HCT116 (cell line): ENCODE measurements at regions of chr6 and their contacts with region 1.

Region 1: DNA sequence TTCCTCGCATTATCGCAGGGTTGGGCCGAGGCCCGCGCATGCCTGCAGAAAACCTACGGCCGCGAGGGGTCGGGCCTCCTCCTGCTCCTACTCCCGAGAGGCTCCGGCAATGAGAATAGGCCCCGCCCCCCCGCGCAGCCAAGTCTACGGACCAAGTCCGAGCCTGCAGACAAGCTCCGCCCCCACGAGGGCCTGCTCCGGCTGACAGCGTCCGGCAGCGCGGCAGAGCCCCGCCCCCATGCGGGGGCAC is 3.1 kb upstream of the GPSM3 start:
- DNase-seq: peak; percentile 99
- ATAC-seq: peak; percentile 88
- H3K4me3 ChIP-seq: peak overlapping the region; percentile 70 to 76
- H3K27ac ChIP-seq: peak overlapping the region; percentile 99
- H3K4me1 ChIP-seq: peaks cover 27 to 58% of the 10 kb centered on the region in 2 experiments
- H3K27me3 ChIP-seq: no peaks in the 10 kb centered on the region
- CTCF ChIP-seq: peak in 1 of 3 experiments; percentile 54; a peak in 2 of 6 replicates
- POLR2A ChIP-seq: peak; percentile 17
- RAD21 ChIP-seq: no peak

Region 2: DNA sequence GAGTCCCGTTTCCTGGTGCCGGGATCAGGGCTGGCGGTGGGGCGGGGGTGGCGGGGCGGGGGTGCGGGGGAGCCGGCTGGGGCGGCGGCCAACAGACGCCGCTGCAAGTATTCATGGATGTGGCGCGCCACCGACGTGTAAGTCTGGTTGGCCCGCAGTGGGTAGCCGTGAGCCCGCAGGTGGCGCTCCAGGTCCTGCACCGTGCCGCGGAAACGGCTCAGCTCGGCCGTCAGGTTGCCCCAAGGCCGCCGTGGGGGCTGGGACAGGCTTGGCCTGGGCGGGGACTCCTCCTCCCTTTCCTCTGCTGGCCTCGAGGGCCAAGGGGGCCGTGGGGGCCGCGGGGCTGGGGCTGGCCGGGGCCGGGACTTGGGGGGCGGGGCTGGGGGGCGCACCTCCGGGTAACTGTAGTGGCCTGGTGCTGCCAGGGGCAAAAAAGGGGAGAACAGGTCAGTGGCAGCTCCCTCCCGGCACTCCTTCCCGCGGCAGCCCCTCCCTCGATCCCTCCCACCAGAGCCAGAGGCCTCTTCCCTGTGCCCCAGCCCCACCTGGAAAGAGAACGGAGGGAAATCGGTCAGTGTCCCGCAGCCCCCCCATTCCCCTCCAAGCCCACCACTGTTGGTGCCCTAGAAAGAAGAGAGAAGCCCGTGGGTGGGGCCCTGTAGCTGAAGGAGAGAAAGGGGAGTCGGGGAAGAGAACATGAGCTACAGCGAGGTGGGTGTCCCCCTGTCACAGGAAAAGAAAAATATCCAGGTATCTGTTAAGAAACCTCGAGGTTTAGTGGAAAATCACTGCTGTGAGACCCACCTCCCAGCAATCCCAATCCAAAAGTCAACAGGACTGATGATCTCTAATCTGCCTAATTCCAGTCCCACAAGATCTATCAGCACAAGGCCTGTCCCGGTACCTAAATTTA is 107.7 kb before region 1 on chr6:
- CTCF ChIA-PET with region 1: interaction called, 4 read pairs
- POLR2A ChIA-PET with region 1: no interaction called
- RAD21 ChIA-PET with region 1: no interaction called
- intact Hi-C with region 1: loop called (anchors 1 kb)
- DNase-seq: peak; percentile 81
- ATAC-seq: peak; percentile 99
- H3K4me3 ChIP-seq: peak overlapping the region; percentile 19; a peak in 3 of 4 replicates
- H3K27ac ChIP-seq: peak overlapping the region; percentile 47; the same call in 1 of the 2 replicates
- H3K4me1 ChIP-seq: peaks cover 14 to 28% of the 10 kb centered on the region in 2 experiments
- H3K27me3 ChIP-seq: no peaks in the 10 kb centered on the region
- CTCF ChIP-seq: peak; percentile 59 to 71 (median 64)
- POLR2A ChIP-seq: no peak
- RAD21 ChIP-seq: peak; percentile 88

Region 3: GRCh38 chr6:32118782-32119628 is 76.6 kb before region 1 on chr6:
- CTCF ChIA-PET with region 1: interaction called, 18 read pairs
- POLR2A ChIA-PET with region 1: no interaction called
- RAD21 ChIA-PET with region 1: no interaction called
- intact Hi-C with region 1: loop called (anchors 1 kb)
- DNase-seq: peak; percentile 59
- ATAC-seq: peak; percentile 94
- H3K4me3 ChIP-seq: no peak overlapping the region
- H3K27ac ChIP-seq: no peak overlapping the region; the same call in 1 of the 2 replicates
- H3K4me1 ChIP-seq: peaks cover 0 to 21% of the 10 kb centered on the region in 2 experiments; a peak in 2 of 4 replicates
- H3K27me3 ChIP-seq: no peaks in the 10 kb centered on the region
- CTCF ChIP-seq: peak; percentile 83 to 98 (median 92)
- POLR2A ChIP-seq: no peak
- RAD21 ChIP-seq: peak; percentile 94

Region 4: GRCh38 chr6:32127717-32128592 is 67.6 kb before region 1 on chr6 and contains the start of gene ATF6B:
- CTCF ChIA-PET with region 1: interaction called, 7 read pairs
- POLR2A ChIA-PET with region 1: interaction called, 10 read pairs
- RAD21 ChIA-PET with region 1: interaction called, 3 to 6 read pairs
- intact Hi-C with region 1: loop called (anchors 1 kb)
- DNase-seq: peak; percentile 98
- ATAC-seq: peak; percentile 89
- H3K4me3 ChIP-seq: peak within 1 kb of the TSS; percentile 94 to 100
- H3K27ac ChIP-seq: peak within 1 kb of the TSS; percentile 92
- H3K4me1 ChIP-seq: peaks cover 24 to 31% of the 10 kb centered on the region in 2 experiments
- H3K27me3 ChIP-seq: no peaks in the 10 kb centered on the region
- CTCF ChIP-seq: no peak
- POLR2A ChIP-seq: no peak
- RAD21 ChIP-seq: no peak
- total RNA-seq, gene ATF6B: 63.9 TPM

Region 5: DNA sequence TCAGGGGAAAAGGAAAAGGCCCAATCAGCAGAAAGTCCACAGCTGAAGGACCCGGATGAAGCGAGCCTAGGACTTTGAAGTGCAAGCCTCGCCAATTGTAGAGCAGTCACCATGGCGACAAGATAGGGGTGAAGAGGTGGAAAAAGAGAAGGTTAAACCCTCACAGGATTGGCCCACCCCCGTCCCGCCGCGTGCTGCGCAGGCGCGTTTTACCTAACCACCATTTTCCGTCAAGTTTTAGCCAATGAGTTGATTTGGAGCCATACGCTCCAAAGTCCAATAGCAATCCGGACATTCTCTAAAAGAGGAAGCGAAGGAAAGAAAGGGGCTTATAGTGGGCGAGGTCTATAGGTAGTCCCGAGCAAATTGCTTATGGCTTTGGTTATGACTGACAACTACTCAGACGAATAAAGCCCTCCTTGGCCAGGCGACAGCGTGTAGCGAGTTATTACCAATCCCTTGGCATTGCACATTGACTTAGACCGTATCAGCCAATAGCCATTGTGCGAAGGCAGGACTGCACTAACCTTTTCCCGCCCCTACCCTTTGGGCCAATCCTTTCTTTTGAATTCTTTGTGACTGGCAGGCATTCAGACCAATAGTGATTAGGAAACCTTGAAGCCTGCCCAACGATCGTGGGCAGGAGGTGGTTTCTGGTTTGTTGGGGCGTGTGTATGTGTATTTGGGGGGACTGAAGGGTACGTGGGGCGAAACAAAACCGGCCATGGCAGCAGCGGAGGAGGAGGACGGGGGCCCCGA is 17.6 kb before region 1 on chr6 and contains the start of gene RNF5:
- CTCF ChIA-PET with region 1: interaction called, 10 read pairs
- POLR2A ChIA-PET with region 1: interaction called, 10 read pairs
- RAD21 ChIA-PET with region 1: no interaction called
- intact Hi-C with region 1: no loop called
- DNase-seq: peak; percentile 100
- ATAC-seq: peak; percentile 87
- H3K4me3 ChIP-seq: peak within 1 kb of the TSS; percentile 93 to 98
- H3K27ac ChIP-seq: peak within 1 kb of the TSS; percentile 74
- H3K4me1 ChIP-seq: peaks cover 24 to 46% of the 10 kb centered on the region in 2 experiments
- H3K27me3 ChIP-seq: no peaks in the 10 kb centered on the region
- CTCF ChIP-seq: no peak
- POLR2A ChIP-seq: no peak
- RAD21 ChIP-seq: no peak
- total RNA-seq, gene RNF5: 45.9 TPM